WTC11 (cell line): ENCODE measurements at regions of chr6 and their contacts with region 1.

Region 1: GRCh38 chr6:43221046-43221972 is 8.0 kb downstream of the DNPH1 start:
- DNase-seq: no peak
- ATAC-seq: no peak
- H3K4me3 Mint-ChIP-seq: no peak overlapping the region
- H3K27ac Mint-ChIP-seq: 0 out of 2 replicates have a peak overlapping the region, but pooled peaks have one; percentile 33
- H3K4me1 Mint-ChIP-seq: peaks cover 9% of the 10 kb centered on the region; the same call in 1 of the 2 replicates
- H3K27me3 Mint-ChIP-seq: no peaks in the 10 kb centered on the region
- CTCF ChIP-seq: no peak

Region 2: GRCh38 chr6:42947950-42948349 is 273.4 kb before region 1 on chr6:
- CTCF ChIA-PET with region 1: no interaction called
- POLR2A ChIA-PET with region 1: interaction called, 10 read pairs
- DNase-seq: no peak
- ATAC-seq: no peak
- H3K4me3 Mint-ChIP-seq: no peak overlapping the region
- H3K27ac Mint-ChIP-seq: peak overlapping the region; percentile 15; the same call in 1 of the 2 replicates
- H3K4me1 Mint-ChIP-seq: peaks cover 9% of the 10 kb centered on the region
- H3K27me3 Mint-ChIP-seq: no peaks in the 10 kb centered on the region
- CTCF ChIP-seq: no peak

Region 3: GRCh38 chr6:43280234-43280633 is 58.9 kb after region 1 on chr6:
- CTCF ChIA-PET with region 1: no interaction called
- POLR2A ChIA-PET with region 1: no interaction called
- DNase-seq: no peak
- ATAC-seq: no peak
- H3K4me3 Mint-ChIP-seq: no peak overlapping the region
- H3K27ac Mint-ChIP-seq: no peak overlapping the region
- H3K4me1 Mint-ChIP-seq: peaks cover 28% of the 10 kb centered on the region
- H3K27me3 Mint-ChIP-seq: peaks cover 33% of the 10 kb centered on the region
- CTCF ChIP-seq: no peak

Region 4: DNA sequence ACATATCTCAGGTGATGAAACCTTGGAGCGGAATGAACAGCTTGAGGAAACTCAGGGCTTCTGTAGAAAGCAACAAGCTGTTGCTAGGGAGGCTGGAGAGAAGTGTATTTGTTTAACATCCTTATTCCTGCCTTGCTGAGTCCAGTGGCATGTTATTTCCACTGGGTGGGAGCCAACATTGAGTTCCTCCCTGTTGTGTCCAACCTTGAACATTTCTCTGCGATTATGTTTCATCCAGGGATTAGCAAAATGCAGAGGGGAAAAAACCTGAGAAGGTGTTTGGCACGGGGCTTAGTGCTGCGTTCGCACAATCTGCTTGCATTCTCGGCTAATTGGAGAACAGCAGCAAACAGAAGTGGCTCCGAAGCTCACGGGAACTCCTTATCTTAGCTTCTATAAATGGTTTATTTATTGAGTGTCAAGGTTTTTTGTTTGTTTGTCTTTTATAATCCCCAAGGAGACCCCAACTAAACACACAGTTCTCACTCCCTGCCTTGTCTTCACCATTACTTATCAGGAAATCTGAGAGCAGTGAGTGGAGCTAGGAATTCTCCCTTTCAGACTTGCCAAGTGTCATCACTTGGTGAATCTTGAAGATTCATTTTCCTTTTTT is 1579.0 kb after region 1 on chr6:
- CTCF ChIA-PET with region 1: no interaction called
- POLR2A ChIA-PET with region 1: no interaction called
- DNase-seq: no peak
- ATAC-seq: no peak
- H3K4me3 Mint-ChIP-seq: no peak overlapping the region
- H3K27ac Mint-ChIP-seq: no peak overlapping the region
- H3K4me1 Mint-ChIP-seq: peaks cover 17% of the 10 kb centered on the region
- H3K27me3 Mint-ChIP-seq: no peaks in the 10 kb centered on the region
- CTCF ChIP-seq: no peak